Heart left ventricle (tissue), 16 donors: ENCODE measurements at regions of chr6 and their contacts with region 1.

Region 1: DNA sequence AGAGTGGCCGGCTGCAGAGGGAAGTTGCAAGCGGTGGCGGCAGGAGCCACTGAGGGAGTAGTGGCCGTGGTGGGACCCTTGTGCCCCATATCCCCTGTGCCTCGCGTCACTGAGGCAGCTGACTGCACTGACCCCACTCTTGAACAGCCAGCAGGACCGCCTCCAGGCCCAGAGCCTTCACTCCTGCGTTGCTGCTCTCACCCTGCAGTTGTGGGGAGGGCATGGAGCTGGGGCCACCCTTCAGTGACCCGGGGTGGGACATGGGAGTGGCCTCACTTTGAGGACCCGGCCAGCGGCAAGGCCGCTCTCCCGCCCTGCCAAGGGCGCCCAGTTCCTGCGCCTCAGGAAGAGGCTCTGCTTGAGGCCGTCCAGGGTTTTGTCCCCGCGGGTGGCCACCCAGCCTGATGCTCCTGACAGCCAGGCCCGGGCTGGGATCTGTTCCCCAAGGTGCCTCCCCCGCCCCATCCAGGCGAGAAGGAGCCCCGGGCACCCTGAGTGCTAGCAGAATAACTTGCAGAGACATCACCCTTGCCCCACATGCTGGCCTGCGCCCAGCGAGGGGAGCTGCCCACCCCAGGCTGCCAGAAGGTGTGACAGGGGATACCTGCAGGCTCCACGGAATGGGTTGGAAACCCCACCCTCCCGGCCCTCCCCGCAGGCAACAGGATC is 44.4 kb downstream of the HLA-DRA start:
- DNase-seq: peak in 1 of 5 donors; percentile 43
- ATAC-seq: peak in 1 of 4 donors; percentile 42
- H3K4me3 ChIP-seq: no peak overlapping the region
- H3K27ac ChIP-seq: no peak overlapping the region
- H3K4me1 ChIP-seq: no peaks in the 10 kb centered on the region
- H3K27me3 ChIP-seq: peaks cover 0 to 4% (median 0%) of the 10 kb centered on the region in 9 donors
- CTCF ChIP-seq: no peak
- POLR2A ChIP-seq: no peak

Region 2: GRCh38 chr6:32576250-32576649 is 92.1 kb after region 1 on chr6:
- intact Hi-C with region 1: loop called in 2 of 10 experiments (anchors 10 kb)
- DNase-seq: no peak
- ATAC-seq: no peak
- H3K4me3 ChIP-seq: no peak overlapping the region
- H3K27ac ChIP-seq: no peak overlapping the region
- H3K4me1 ChIP-seq: no peaks in the 10 kb centered on the region
- H3K27me3 ChIP-seq: peaks cover 0 to 7% (median 0%) of the 10 kb centered on the region in 9 donors
- CTCF ChIP-seq: no peak
- POLR2A ChIP-seq: no peak